Right cardiac atrium (tissue), 5 donors: ENCODE measurements at regions of chr3 and their contacts with region 1.

Region 1: GRCh38 chr3:169857811-169858210 is 11.9 kb downstream of the LRRC31 start:
- DNase-seq: no peak
- ATAC-seq: no peak
- H3K4me3 ChIP-seq: no peak overlapping the region
- H3K27ac ChIP-seq: no peak overlapping the region
- H3K4me1 ChIP-seq: no peaks in the 10 kb centered on the region
- H3K27me3 ChIP-seq: no peaks in the 10 kb centered on the region

Region 2: GRCh38 chr3:170037463-170038433 is 179.9 kb after region 1 on chr3 and contains the start of gene GPR160:
- intact Hi-C with region 1: loop called in 1 of 4 experiments (anchors 10 kb)
- DNase-seq: peak; percentile 73 to 88 (median 87)
- ATAC-seq: peak; percentile 85 to 86
- H3K4me3 ChIP-seq: peak within 1 kb of the TSS; percentile 51
- H3K27ac ChIP-seq: no peak within 1 kb of the TSS
- H3K4me1 ChIP-seq: no peaks in the 10 kb centered on the region
- H3K27me3 ChIP-seq: no peaks in the 10 kb centered on the region
- total RNA-seq, gene GPR160: 0.48 to 0.74 (median 0.60) TPM